Mammary epithelial cell (primary cell): ENCODE measurements at regions of chr1 and their contacts with region 1.

Region 1: DNA sequence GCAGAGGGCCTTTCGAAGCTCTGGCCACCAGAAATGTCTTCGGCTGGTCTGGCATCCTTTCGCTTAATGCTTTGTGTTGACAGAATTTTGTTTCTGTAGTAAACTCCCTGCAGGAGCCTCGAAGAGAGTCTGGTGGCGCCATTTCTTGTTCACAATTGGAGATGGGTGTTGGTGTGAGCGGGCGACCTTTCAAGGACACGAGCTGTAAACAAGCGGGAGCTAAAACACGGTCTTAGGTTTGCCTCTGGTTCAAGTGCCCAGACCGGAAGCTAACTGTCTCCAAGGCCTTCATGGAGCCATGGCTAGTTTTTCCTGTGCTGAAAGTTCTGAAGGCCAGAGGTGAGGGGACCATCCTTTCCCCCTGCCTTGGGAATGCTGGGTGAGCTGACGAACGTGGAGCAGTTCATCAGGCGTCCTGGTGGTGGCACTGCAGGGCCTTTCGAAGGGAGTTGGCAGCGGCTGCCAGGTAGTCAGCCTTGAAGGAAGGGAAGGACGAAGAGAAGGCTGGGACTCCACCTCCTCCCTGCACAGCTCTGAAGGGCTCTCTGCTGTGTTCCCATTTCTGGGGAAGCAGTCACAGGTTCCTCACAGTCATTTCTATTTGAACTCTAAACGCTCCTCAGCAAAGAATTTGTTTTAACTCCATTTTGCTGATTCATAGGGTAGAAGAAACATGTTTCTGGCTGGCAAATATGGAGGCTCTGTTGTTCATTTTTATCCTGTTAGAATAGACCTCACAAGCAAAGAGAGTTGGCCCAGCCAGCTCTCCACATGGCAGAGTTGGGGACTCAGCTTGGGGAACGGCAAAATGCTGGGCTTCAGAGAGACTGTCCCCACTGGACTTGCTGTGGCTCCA is 35.2 kb downstream of the URB2 start:
- DNase-seq: peak; percentile 51
- H3K4me3 ChIP-seq: no peak overlapping the region
- H3K27ac ChIP-seq: no peak overlapping the region
- H3K4me1 ChIP-seq: peaks cover 8% of the 10 kb centered on the region
- H3K27me3 ChIP-seq: no peaks in the 10 kb centered on the region
- CTCF ChIP-seq: peak; percentile 87 to 96

Region 2: GRCh38 chr1:229848752-229849677 is 187.8 kb after region 1 on chr1:
- CTCF ChIA-PET with region 1: no interaction called
- dilution Hi-C with region 1: no loop called
- in situ Hi-C with region 1: no loop called
- intact Hi-C with region 1: loop called (anchors 5 kb)
- DNase-seq: peak; percentile 9
- H3K4me3 ChIP-seq: no peak overlapping the region
- H3K27ac ChIP-seq: no peak overlapping the region
- H3K4me1 ChIP-seq: peaks cover 9% of the 10 kb centered on the region
- H3K27me3 ChIP-seq: peaks cover 2% of the 10 kb centered on the region
- CTCF ChIP-seq: peak; percentile 62 to 65